Dorsolateral prefrontal cortex (tissue), 120 donors: ENCODE measurements at regions of chr10 and their contacts with region 1.

Region 1: GRCh38 chr10:125060826-125061556 is 99.4 kb downstream of the CTBP2 start:
- DNase-seq: peak; percentile 83 to 92 (median 90)
- H3K4me3 ChIP-seq: peak overlapping the region in 55 of 59 donors; percentile 3 to 54 (median 29)
- H3K27ac ChIP-seq: peak overlapping the region; percentile 48 to 95 (median 84)
- H3K27me3 ChIP-seq: no peaks in the 10 kb centered on the region
- CTCF ChIP-seq: peak; percentile 82 to 97 (median 92)

Region 2: GRCh38 chr10:124916585-124917427 is 144.2 kb before region 1 on chr10:
- intact Hi-C with region 1: loop called in 1 of 2 experiments (anchors 10 kb)
- DNase-seq: peak; percentile 92 to 98 (median 97)
- H3K4me3 ChIP-seq: peak overlapping the region; percentile 55 to 97 (median 84)
- H3K27ac ChIP-seq: peak overlapping the region; percentile 85 to 99 (median 94)
- H3K27me3 ChIP-seq: no peaks in the 10 kb centered on the region
- CTCF ChIP-seq: peak in 36 of 56 donors; percentile 11 to 62 (median 31)

Region 3: GRCh38 chr10:125000366-125001312 is 60.4 kb before region 1 on chr10:
- intact Hi-C with region 1: loop called in 1 of 2 experiments (anchors 2 kb)
- DNase-seq: peak in 7 of 10 donors; percentile 22 to 70 (median 51)
- H3K4me3 ChIP-seq: peak overlapping the region in 17 of 59 donors; percentile 4 to 42 (median 20)
- H3K27ac ChIP-seq: peak overlapping the region; percentile 70 to 99 (median 94)
- H3K27me3 ChIP-seq: no peaks in the 10 kb centered on the region
- CTCF ChIP-seq: peak in 50 of 56 donors; percentile 19 to 64 (median 45)

Region 4: DNA sequence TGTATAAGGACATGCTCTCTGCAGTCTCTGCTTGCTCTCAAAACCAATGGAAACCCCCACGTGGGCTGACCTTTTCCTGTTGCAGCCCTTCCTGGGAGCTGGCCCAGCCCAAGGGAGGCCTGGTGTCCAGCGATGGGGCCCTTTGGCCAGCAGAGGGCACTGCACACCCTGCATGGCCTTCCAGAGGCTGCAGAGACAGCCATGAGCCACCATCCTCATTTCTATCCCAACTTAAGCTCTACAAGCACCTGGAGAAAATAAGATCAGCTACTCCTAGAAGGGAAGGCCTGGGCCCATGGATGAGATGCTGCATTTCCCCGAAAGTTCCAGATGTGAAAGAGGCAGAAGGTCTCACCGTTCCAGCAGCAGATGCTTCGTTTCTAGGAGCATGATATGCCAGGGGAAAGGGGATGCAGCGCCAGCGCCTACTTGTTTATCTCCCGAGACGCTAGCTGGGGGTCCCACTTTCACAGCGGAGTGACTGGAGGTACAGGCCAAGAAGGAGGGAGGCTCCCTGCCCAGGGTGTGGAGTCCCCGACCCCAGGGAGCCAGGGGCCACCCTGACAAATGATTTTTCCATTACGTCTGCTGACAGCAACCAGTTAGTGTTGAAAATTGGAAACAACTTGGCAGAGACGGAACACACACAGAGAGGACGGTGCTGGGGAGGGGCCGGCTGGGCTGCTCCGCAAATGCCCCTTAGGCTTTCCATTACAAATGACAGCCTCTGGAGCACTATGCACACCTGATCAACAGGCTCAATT is 12.7 kb before region 1 on chr10:
- intact Hi-C with region 1: loop called in 1 of 2 experiments (anchors 1 kb)
- DNase-seq: peak; percentile 78 to 93 (median 87)
- H3K4me3 ChIP-seq: peak overlapping the region in 2 of 59 donors; percentile 6 to 8
- H3K27ac ChIP-seq: peak overlapping the region in 26 of 59 donors; percentile 1 to 71 (median 34)
- H3K27me3 ChIP-seq: no peaks in the 10 kb centered on the region
- CTCF ChIP-seq: peak; percentile 71 to 99 (median 97)